Pancreas (tissue), 10 donors: ENCODE measurements at regions of chr3 and their contacts with region 1.

Region 1: DNA sequence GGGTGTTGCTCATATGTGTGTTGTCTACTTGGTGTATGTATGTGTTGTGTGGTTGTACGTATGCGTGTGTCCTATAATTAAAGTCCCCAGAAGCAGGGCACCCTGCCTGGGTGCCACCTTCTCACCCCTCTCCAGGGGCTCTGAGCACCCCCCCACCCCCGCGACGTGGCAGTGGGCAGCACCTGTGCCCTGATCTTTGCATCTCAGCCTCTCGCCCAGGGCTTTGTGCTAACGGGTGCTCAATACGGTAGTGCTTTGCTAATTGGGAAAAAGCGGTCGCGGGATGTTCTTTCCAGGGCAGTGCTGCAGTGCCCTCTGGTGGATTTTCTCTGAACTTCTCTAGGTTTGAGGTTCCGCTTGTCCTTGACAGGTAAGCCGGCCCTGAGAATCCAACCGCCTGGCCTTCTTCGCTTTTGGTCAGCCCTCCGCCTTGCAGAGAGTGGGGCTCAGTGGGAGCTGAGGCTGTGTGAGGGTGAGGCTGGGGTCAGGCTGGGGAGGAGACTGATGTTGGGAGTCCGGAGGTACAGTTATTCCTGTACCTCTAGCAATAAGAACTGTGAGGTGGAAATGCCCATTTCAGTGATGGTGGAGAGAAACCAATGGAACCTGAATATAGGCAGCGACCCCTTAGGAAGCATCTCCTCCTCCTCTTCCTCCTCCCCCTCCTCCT is 17.6 kb upstream of the EPHB3 start:
- DNase-seq: peak in 5 of 6 donors; percentile 67 to 89 (median 77)
- ATAC-seq: peak; percentile 77 to 89 (median 88)
- H3K4me3 ChIP-seq: no peak overlapping the region
- H3K27ac ChIP-seq: no peak overlapping the region
- H3K4me1 ChIP-seq: no peaks in the 10 kb centered on the region
- H3K27me3 ChIP-seq: no peaks in the 10 kb centered on the region
- CTCF ChIP-seq: peak; percentile 90 to 92 (median 91)

Region 2: GRCh38 chr3:184371570-184372018 is 172.4 kb before region 1 on chr3:
- intact Hi-C with region 1: loop called in 2 of 3 experiments (anchors 5 kb)
- DNase-seq: peak; percentile 72 to 95 (median 90)
- ATAC-seq: peak; percentile 97 to 99 (median 98)
- H3K4me3 ChIP-seq: no peak overlapping the region
- H3K27ac ChIP-seq: peak overlapping the region in 2 of 4 donors; percentile 4 to 37
- H3K4me1 ChIP-seq: peaks cover 4 to 11% (median 7%) of the 10 kb centered on the region in 3 donors
- H3K27me3 ChIP-seq: no peaks in the 10 kb centered on the region
- CTCF ChIP-seq: peak; percentile 90 to 95 (median 94)

Region 3: GRCh38 chr3:184380191-184380626 is 163.8 kb before region 1 on chr3:
- intact Hi-C with region 1: loop called in 2 of 3 experiments (anchors 5 to 10 kb)
- DNase-seq: peak; percentile 69 to 92 (median 83)
- ATAC-seq: peak; percentile 61 to 83 (median 74)
- H3K4me3 ChIP-seq: peak overlapping the region; percentile 21 to 52 (median 39)
- H3K27ac ChIP-seq: no peak overlapping the region
- H3K4me1 ChIP-seq: peaks cover 7 to 15% (median 10%) of the 10 kb centered on the region in 3 donors
- H3K27me3 ChIP-seq: no peaks in the 10 kb centered on the region
- CTCF ChIP-seq: no peak

Region 4: GRCh38 chr3:185070491-185071286 is 526.7 kb after region 1 on chr3:
- intact Hi-C with region 1: no loop called
- DNase-seq: no peak
- ATAC-seq: peak in 1 of 4 donors; percentile 51
- H3K4me3 ChIP-seq: no peak overlapping the region
- H3K27ac ChIP-seq: no peak overlapping the region
- H3K4me1 ChIP-seq: no peaks in the 10 kb centered on the region
- H3K27me3 ChIP-seq: no peaks in the 10 kb centered on the region
- CTCF ChIP-seq: no peak